Activated B cell treated with CpG ODN at 0.5 μM for 24 hours (primary cell): ENCODE measurements at regions of chr2 and their contacts with region 1.

Region 1: GRCh38 chr2:218395797-218396687 is 3.6 kb upstream of the CTDSP1 start:
- DNase-seq: peak; percentile 88
- ATAC-seq: peak; percentile 70
- H3K4me3 Mint-ChIP-seq: peak overlapping the region; percentile 92
- H3K27ac Mint-ChIP-seq: peak overlapping the region; percentile 96
- H3K4me1 Mint-ChIP-seq: peaks cover 51% of the 10 kb centered on the region
- H3K27me3 Mint-ChIP-seq: no peaks in the 10 kb centered on the region
- CTCF ChIP-seq: peak; percentile 44

Region 2: DNA sequence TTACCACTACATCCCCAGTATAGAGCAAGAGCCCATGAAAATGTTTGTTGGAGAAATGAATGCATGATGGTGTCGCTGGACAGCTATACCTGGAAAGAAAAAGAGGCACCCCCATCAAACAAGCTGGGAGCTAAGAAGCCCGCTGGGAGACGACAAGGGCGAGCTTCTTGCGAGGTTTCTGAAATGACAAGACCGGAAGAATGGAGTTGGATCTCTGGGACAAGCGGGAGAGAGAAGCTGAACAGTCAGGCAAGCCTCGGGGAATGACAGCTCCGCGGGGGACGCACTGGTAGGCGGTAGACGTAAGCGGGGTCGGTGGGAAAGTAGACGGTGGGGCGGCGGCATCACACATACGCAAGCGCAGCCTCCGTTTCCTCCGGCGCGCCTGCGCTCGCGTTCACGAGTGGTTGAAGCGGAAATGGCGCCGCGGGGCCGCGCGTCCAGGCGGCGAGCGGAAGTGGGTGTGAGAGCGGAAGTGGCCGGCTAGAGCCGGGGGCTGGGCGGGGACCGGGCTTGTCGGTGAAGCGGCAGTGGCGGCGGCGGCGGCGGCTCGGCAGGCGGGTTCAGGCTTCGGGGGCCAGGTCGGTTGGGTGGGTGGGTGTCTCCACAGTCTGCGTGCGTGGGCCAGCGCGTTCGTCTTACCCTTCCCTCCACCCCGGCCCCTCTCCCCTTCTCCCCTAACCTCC is 179.2 kb before region 1 on chr2 and contains the start of gene ARPC2:
- CTCF ChIA-PET with region 1: no interaction called
- POLR2A ChIA-PET with region 1: interaction called, 3 read pairs
- intact Hi-C with region 1: loop called (anchors 1 kb)
- DNase-seq: peak; percentile 95
- ATAC-seq: peak; percentile 63
- H3K4me3 Mint-ChIP-seq: peak within 1 kb of the TSS; percentile 98
- H3K27ac Mint-ChIP-seq: peak within 1 kb of the TSS; percentile 99
- H3K4me1 Mint-ChIP-seq: peaks cover 45% of the 10 kb centered on the region
- H3K27me3 Mint-ChIP-seq: no peaks in the 10 kb centered on the region
- CTCF ChIP-seq: no peak
- total RNA-seq, gene ARPC2: 711 and 737 TPM in 2 replicates

Region 3: DNA sequence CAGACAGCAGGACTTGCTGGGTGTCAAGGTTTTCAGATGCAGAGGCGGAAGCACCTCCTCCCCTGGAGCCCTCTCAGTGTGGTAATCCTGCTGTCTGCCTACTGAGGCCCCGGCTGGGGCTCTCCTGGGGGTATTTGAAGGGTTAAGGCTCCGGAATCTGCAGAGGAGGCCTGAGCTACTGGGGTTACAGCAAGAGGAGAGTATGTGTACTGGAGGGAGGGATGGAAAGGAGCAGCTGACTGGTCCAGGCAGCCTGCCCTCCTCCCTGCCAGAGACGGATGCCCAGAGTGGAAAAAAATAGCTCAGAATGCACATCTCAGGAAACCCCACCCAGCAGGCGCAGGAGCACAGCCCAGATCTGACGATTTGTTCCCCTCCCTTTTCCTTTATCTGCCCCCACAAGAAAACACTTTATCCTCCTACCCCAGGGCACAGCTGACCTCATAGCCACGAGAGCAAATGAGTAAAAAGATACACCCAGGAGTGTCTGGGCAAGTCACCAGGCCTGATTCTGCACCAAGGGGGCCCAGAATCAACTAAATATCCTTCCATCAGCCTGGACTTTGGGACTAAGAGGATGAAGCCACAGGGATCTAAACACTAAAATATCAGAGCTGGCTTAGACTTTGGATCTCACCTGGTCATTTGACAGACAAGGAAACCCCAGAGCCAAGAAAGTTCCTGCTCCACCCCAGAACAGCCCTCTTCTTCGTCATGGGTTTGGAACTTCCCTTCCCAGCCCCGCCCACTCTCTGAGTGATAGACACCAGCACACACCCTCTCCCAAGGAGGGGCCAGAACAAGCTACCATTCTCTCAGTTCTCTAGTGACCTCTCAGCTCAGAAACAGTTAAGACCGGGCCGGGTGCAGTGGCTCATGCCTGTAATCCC is 109.2 kb before region 1 on chr2:
- CTCF ChIA-PET with region 1: interaction called, 12 read pairs
- POLR2A ChIA-PET with region 1: interaction called, 16 read pairs
- intact Hi-C with region 1: loop called (anchors 1 kb)
- DNase-seq: peak; percentile 63
- ATAC-seq: peak; percentile 73
- H3K4me3 Mint-ChIP-seq: peak overlapping the region; percentile 77
- H3K27ac Mint-ChIP-seq: peak overlapping the region; percentile 94
- H3K4me1 Mint-ChIP-seq: peaks cover 91% of the 10 kb centered on the region
- H3K27me3 Mint-ChIP-seq: no peaks in the 10 kb centered on the region
- CTCF ChIP-seq: no peak

Region 4: DNA sequence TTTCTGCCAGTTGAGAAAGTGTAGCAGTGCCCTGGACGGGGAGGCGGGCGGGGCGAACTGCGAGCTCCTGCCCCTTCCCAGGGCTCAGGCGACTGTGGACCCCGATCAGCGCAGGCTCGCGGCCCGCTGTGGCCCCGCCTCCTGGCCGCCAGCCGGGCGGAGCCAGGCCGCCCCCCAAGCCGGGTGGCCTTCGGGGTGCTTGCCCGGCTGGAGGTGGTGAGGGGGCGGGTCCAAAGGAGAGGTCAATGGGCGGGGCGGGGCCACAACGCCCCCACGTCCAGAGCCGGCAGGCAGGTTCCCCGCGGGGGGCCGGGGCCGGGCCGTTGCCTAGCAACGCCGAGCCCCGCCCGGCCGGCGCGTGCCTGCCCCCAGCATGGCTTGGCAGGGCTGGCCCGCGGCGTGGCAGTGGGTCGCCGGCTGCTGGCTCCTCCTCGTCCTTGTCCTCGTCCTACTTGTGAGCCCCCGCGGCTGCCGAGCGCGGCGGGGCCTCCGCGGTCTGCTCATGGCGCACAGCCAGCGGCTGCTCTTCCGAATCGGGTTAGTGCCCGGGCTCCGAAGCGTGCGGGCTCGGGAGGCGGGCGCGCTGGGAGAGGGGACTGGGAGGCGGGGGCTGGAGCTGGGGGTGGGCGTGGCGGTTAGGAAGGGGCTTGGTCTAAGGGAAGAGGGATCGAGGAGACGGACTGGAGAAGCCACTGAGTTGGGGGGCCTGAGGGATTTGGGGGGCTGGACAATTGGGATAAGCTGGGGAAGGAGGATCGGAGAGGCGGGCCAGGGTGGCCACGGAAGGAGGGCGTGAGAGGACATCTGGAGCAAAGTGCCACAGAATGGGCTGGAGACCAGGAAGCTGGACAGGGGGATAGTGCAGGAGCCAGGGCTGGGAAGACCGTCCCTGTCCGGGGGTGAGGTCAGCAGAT is 72.9 kb before region 1 on chr2:
- CTCF ChIA-PET with region 1: no interaction called
- POLR2A ChIA-PET with region 1: no interaction called
- intact Hi-C with region 1: loop called (anchors 2 kb)
- DNase-seq: peak; percentile 65
- ATAC-seq: peak; percentile 74
- H3K4me3 Mint-ChIP-seq: peak overlapping the region; percentile 81
- H3K27ac Mint-ChIP-seq: peak overlapping the region; percentile 61
- H3K4me1 Mint-ChIP-seq: peaks cover 42% of the 10 kb centered on the region
- H3K27me3 Mint-ChIP-seq: peaks cover 7% of the 10 kb centered on the region
- CTCF ChIP-seq: no peak

Region 5: DNA sequence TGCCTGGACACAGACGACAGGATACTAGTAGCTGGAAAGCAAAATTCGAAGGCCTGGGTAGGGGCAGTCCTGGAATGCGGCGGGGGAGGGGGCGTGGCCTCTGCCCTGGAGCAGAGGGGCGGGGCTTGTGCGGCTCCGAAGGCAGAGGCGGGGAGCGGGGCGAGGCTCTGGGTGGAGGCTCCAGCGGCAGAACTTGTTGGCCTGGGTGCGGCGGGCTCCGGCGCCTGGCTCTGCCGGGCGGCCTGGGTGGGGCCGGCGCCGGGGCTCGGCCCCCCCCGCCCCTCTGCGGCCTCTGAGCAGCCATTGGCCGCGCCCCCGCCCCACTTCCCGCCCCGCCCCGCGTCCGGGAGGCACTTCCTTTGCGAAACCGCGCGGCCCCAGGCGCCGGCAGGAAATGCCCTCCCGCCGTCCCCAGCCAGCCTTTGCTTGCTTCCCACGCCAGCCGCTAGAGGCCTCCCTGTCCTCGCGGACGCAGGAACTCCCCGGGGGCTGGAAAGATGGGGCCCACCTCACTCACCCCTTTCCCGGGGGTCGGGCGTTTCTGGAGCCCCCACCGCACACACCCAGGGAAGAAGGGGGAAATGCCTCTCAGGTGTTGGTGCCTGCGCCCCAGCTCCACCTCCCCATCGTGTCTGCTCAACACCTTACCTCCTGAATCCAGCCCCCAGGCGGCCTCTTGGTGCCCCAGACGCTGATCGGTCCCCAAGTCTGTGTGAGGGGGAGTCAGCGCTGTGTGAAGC is 10.3 kb after region 1 on chr2:
- CTCF ChIA-PET with region 1: interaction called, 3 read pairs
- POLR2A ChIA-PET with region 1: interaction called, 8 read pairs
- intact Hi-C with region 1: loop called (anchors 1 kb)
- DNase-seq: peak; percentile 89
- ATAC-seq: peak; percentile 83
- H3K4me3 Mint-ChIP-seq: peak overlapping the region; percentile 85
- H3K27ac Mint-ChIP-seq: peak overlapping the region; percentile 86
- H3K4me1 Mint-ChIP-seq: peaks cover 54% of the 10 kb centered on the region
- H3K27me3 Mint-ChIP-seq: no peaks in the 10 kb centered on the region
- CTCF ChIP-seq: no peak

Region 6: DNA sequence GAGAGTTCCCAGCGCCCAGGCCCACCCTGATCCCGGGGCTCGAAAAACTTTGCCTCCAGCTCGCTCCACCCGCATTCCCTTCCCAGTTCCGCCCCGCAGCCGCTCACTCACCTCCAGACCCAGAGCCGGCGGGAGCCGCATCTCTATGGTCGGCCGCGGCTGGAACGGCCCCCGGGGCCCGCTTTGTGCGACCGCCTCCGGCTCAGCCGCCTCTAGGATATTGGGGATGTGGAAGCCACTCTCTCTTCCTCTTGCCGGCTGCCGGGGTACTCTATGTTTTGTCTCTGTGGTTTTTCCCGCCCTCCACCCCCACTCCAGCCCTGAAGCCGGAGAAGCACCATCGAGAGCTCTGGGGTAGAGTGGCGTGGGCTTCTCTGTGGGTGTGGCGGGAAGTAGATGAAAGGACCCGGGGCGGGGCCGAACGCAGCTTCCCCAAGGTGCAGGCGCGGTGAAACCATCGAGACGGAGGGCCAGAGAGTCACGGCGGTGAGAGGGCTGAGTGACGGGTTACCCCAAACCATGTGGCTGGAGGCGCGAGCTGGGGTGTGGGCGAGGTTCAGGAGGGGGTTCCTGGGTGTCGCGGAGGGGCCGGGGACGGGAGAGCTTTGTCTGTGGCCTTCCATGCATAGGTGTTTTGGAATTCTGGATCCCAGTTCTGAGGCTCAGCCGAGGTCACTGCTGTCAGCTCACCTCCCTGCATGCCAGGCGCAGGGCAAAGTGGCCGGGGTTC is 263.4 kb after region 1 on chr2 and contains the starts of genes BCS1L and ZNF142:
- CTCF ChIA-PET with region 1: no interaction called
- POLR2A ChIA-PET with region 1: interaction called, 4 read pairs
- intact Hi-C with region 1: loop called (anchors 1 kb)
- DNase-seq: peak; percentile 85
- ATAC-seq: peak; percentile 96
- H3K4me3 Mint-ChIP-seq: peak within 1 kb of the TSS; percentile 99
- H3K27ac Mint-ChIP-seq: peak within 1 kb of the TSS; percentile 93
- H3K4me1 Mint-ChIP-seq: peaks cover 31% of the 10 kb centered on the region
- H3K27me3 Mint-ChIP-seq: no peaks in the 10 kb centered on the region
- CTCF ChIP-seq: no peak
- total RNA-seq, gene BCS1L: 66.9 and 75.1 TPM in 2 replicates
- total RNA-seq, gene ZNF142: 44.9 and 63.6 TPM in 2 replicates